PC-9 (cell line): ENCODE measurements at regions of chr5 and their contacts with region 1.

Region 1: GRCh38 chr5:151825445-151825844 is 53.7 kb downstream of the G3BP1 start:
- DNase-seq: peak; percentile 29 to 45
- H3K4me3 ChIP-seq: no peak overlapping the region
- H3K27ac ChIP-seq: no peak overlapping the region
- H3K4me1 ChIP-seq: no peaks in the 10 kb centered on the region
- H3K27me3 ChIP-seq: no peaks in the 10 kb centered on the region
- CTCF ChIP-seq: peak; percentile 89

Region 2: GRCh38 chr5:151961557-151961956 is 136.1 kb after region 1 on chr5:
- CTCF ChIA-PET with region 1: no interaction called
- POLR2A ChIA-PET with region 1: no interaction called
- intact Hi-C with region 1: no loop called
- DNase-seq: no peak
- H3K4me3 ChIP-seq: no peak overlapping the region
- H3K27ac ChIP-seq: no peak overlapping the region
- H3K4me1 ChIP-seq: no peaks in the 10 kb centered on the region
- H3K27me3 ChIP-seq: peaks cover 51% of the 10 kb centered on the region
- CTCF ChIP-seq: no peak

Region 3: DNA sequence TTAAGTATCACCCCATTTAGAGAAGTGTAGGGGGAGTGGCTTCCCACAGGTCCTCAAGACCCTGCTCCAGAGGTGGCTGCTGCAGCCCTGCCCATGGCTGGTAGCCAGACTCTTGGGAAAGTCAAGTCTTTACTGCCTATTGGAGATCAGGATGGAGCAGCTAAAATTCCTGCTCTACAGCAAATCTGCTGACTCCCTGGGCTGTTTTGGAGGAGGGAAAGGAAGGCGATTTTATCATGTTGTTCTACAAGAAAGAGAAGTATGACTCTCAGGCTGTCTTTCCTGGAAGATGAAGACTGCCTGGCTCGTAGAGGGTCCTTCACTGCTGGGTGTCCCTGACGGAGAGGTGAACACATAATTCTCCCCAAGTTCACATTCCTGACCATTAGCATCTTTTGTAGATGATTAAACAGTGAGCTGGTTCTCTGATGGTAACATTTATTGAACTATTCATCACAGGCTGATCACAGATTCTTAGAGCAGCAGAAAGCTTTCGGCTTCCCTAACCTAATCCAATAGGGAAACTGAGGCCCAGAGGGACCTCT is 311.5 kb after region 1 on chr5:
- CTCF ChIA-PET with region 1: interaction called, 10 read pairs
- POLR2A ChIA-PET with region 1: no interaction called
- intact Hi-C with region 1: loop called (anchors 5 kb)
- DNase-seq: no peak
- H3K4me3 ChIP-seq: no peak overlapping the region
- H3K27ac ChIP-seq: no peak overlapping the region
- H3K4me1 ChIP-seq: no peaks in the 10 kb centered on the region
- H3K27me3 ChIP-seq: no peaks in the 10 kb centered on the region
- CTCF ChIP-seq: no peak

Region 4: GRCh38 chr5:152142840-152143469 is 317.5 kb after region 1 on chr5:
- CTCF ChIA-PET with region 1: interaction called, 20 read pairs
- POLR2A ChIA-PET with region 1: no interaction called
- intact Hi-C with region 1: loop called (anchors 5 kb)
- DNase-seq: peak in 1 of 2 experiments; percentile 41
- H3K4me3 ChIP-seq: no peak overlapping the region
- H3K27ac ChIP-seq: no peak overlapping the region
- H3K4me1 ChIP-seq: no peaks in the 10 kb centered on the region
- H3K27me3 ChIP-seq: no peaks in the 10 kb centered on the region
- CTCF ChIP-seq: peak; percentile 89

Region 5: GRCh38 chr5:152271420-152271819 is 446.0 kb after region 1 on chr5:
- CTCF ChIA-PET with region 1: no interaction called
- POLR2A ChIA-PET with region 1: no interaction called
- intact Hi-C with region 1: loop called (anchors 5 kb)
- DNase-seq: no peak
- H3K4me3 ChIP-seq: no peak overlapping the region
- H3K27ac ChIP-seq: no peak overlapping the region
- H3K4me1 ChIP-seq: no peaks in the 10 kb centered on the region
- H3K27me3 ChIP-seq: no peaks in the 10 kb centered on the region
- CTCF ChIP-seq: peak; percentile 65

Region 6: GRCh38 chr5:152349683-152350526 is 524.5 kb after region 1 on chr5:
- CTCF ChIA-PET with region 1: interaction called, 7 read pairs
- POLR2A ChIA-PET with region 1: no interaction called
- intact Hi-C with region 1: loop called (anchors 5 kb)
- DNase-seq: peak in 1 of 2 experiments; percentile 33
- H3K4me3 ChIP-seq: no peak overlapping the region
- H3K27ac ChIP-seq: no peak overlapping the region
- H3K4me1 ChIP-seq: no peaks in the 10 kb centered on the region
- H3K27me3 ChIP-seq: no peaks in the 10 kb centered on the region
- CTCF ChIP-seq: peak; percentile 89

Region 7: DNA sequence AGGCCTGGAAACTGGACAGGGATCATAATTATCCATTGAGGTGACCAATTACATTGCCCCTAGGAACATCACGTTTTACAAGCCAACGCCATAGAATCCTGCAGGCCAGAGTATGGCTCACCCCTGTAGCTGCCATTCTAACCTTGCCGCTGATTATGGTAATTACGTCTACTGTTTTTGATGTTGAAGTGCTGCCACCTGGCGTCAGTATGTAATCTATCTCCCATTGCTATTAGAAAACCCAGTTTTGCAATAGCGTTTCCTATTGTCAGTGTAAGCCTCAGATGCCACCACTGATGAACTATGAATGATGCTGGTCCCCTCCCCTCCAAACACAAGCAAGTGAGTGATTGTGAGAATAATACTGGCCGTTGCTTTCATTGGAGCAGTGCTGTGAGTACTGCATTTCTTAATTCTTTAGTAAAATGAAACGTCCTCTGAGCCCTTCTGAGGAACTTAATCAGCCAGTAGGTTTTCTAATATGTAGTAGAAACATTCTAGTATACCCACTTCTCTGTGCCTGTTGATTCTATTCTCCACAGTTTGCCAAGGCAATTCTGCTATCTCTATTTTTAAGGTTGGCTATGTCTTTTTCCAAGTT is 680.1 kb after region 1 on chr5:
- CTCF ChIA-PET with region 1: no interaction called
- POLR2A ChIA-PET with region 1: no interaction called
- intact Hi-C with region 1: loop called (anchors 2 kb)
- DNase-seq: peak; percentile 41
- H3K4me3 ChIP-seq: no peak overlapping the region
- H3K27ac ChIP-seq: no peak overlapping the region
- H3K4me1 ChIP-seq: no peaks in the 10 kb centered on the region
- H3K27me3 ChIP-seq: no peaks in the 10 kb centered on the region
- CTCF ChIP-seq: peak; percentile 73

Region 8: GRCh38 chr5:153358315-153358976 is 1533.0 kb after region 1 on chr5:
- CTCF ChIA-PET with region 1: no interaction called
- POLR2A ChIA-PET with region 1: no interaction called
- intact Hi-C with region 1: no loop called
- DNase-seq: no peak
- H3K4me3 ChIP-seq: no peak overlapping the region
- H3K27ac ChIP-seq: no peak overlapping the region
- H3K4me1 ChIP-seq: no peaks in the 10 kb centered on the region
- H3K27me3 ChIP-seq: 0 out of 2 replicates have a peak, but pooled peaks cover 3% of the 10 kb centered on the region
- CTCF ChIP-seq: no peak